WTC11 (cell line): ENCODE measurements at regions of chr2 and their contacts with region 1.

Region 1: DNA sequence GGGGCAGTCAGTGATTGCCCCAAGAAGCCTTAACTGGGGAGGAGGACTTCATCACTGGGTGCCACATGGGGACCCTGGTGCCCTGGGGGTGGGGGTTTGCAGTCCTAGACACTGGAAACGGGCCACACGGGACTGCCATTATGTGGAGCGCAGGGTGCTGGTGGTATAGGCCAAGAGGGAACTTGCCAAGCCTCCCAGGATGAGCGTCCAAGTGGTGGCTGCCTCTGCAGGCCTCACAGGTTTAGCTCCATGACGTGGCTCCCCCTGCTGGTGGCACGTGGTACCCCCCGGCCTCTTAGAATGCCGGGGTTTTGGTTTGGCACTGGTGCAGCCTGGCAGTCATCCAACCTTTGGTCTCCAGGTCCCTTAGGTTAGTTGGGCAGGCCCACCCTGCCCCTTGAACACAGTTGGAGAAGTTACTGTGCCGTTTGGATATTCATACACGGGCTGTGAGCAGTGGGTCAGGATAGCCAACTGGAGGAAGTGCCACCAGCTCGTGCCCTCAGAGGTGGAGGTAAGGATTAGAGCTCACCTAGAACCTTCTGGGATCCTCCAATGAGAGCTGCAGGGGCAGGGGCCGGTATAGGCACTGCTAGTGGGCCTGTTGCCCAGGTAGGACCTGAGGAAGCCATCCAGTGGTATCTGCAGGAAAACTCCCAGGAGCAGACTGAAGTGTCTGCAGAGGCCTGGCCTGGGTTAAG is 5.6 kb downstream of the PTMA start:
- DNase-seq: peak; percentile 90
- ATAC-seq: peak; percentile 35
- H3K4me3 Mint-ChIP-seq: peak overlapping the region; percentile 56
- H3K27ac Mint-ChIP-seq: peak overlapping the region; percentile 98
- H3K4me1 Mint-ChIP-seq: peaks cover 34% of the 10 kb centered on the region
- H3K27me3 Mint-ChIP-seq: no peaks in the 10 kb centered on the region; the same call in 1 of the 2 replicates
- CTCF ChIP-seq: peak; percentile 93

Region 2: GRCh38 chr2:231604685-231605606 is 108.9 kb before region 1 on chr2:
- CTCF ChIA-PET with region 1: interaction called, 14 read pairs
- POLR2A ChIA-PET with region 1: no interaction called
- DNase-seq: peak; percentile 99
- ATAC-seq: peak; percentile 75
- H3K4me3 Mint-ChIP-seq: peak overlapping the region; percentile 61
- H3K27ac Mint-ChIP-seq: peak overlapping the region; percentile 94
- H3K4me1 Mint-ChIP-seq: peaks cover 30% of the 10 kb centered on the region
- H3K27me3 Mint-ChIP-seq: no peaks in the 10 kb centered on the region
- CTCF ChIP-seq: no peak

Region 3: GRCh38 chr2:231621129-231621879 is 92.6 kb before region 1 on chr2:
- CTCF ChIA-PET with region 1: interaction called, 17 read pairs
- POLR2A ChIA-PET with region 1: interaction called, 3 read pairs
- DNase-seq: peak; percentile 55
- ATAC-seq: peak; percentile 79
- H3K4me3 Mint-ChIP-seq: peak overlapping the region; percentile 17
- H3K27ac Mint-ChIP-seq: peak overlapping the region; percentile 88
- H3K4me1 Mint-ChIP-seq: peaks cover 54% of the 10 kb centered on the region
- H3K27me3 Mint-ChIP-seq: no peaks in the 10 kb centered on the region
- CTCF ChIP-seq: no peak

Region 4: DNA sequence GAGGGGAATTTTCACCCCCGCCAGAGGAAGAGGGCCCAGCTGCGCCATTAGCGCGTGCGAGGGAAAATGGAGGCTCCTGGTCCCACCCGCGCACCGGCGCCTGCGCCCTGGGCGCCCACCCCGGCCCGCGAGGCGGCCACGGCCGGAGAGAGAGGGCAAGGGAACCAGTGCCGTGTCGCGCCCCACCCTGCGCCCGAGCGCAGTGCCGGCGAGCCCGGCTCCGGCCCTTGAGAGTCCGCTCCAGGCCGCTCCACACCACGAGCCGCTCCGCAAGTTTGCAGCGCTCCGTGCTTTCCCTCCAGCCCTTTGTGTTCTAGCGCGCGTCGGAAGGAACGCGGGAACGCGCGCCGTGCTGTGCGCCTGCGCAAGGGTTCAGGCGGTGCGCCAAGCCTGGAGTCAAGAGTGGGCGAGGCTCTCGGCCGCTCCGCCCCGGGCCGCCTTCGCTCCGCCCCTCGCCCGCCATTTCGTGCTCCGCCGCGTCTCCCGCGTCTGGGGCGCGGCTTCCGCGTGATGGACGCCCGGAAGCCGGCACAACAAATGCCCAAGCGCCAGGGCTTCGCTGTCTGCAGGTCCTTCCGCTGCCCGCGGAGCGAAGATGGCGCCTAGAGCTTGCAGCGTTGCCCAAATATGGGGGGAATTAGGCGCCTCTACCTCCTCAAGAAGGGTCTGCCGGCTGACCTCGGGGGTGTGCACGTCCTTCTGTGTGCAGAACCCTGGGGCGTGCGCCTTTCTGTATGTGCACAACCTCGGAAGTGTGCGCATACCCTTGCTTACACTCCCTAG is 51.7 kb before region 1 on chr2:
- CTCF ChIA-PET with region 1: interaction called, 13 read pairs
- POLR2A ChIA-PET with region 1: interaction called, 17 read pairs
- DNase-seq: peak; percentile 98
- ATAC-seq: peak; percentile 67
- H3K4me3 Mint-ChIP-seq: peak overlapping the region; percentile 60
- H3K27ac Mint-ChIP-seq: peak overlapping the region; percentile 94
- H3K4me1 Mint-ChIP-seq: peaks cover 44% of the 10 kb centered on the region
- H3K27me3 Mint-ChIP-seq: peaks cover 20% of the 10 kb centered on the region
- CTCF ChIP-seq: no peak

Region 5: GRCh38 chr2:231687133-231687852 is 26.6 kb before region 1 on chr2:
- CTCF ChIA-PET with region 1: interaction called, 125 read pairs
- POLR2A ChIA-PET with region 1: interaction called, 61 read pairs
- DNase-seq: peak; percentile 92
- ATAC-seq: peak; percentile 87
- H3K4me3 Mint-ChIP-seq: peak overlapping the region; percentile 64
- H3K27ac Mint-ChIP-seq: peak overlapping the region; percentile 61
- H3K4me1 Mint-ChIP-seq: peaks cover 49% of the 10 kb centered on the region
- H3K27me3 Mint-ChIP-seq: no peaks in the 10 kb centered on the region
- CTCF ChIP-seq: peak; percentile 33

Region 6: DNA sequence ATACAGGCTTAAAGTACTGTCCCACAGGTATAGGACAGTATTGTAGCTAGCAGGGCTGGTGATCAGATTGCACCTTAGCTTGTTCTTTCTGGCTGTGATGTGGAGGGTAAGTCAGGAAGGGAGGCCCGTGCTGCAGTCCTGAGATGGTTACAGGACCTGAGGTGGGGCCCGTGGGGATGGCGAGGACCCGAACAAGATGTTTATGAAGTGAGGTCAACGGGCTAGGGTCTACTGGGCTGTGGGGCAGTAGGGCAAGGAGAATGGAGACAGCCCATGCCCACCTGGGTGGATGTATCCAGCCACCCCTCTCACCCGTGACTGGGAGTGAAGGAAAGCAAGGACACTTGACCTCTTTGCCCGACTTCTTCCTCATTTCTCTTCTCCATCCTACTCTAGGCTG is 12.3 kb after region 1 on chr2:
- CTCF ChIA-PET with region 1: interaction called, 32 read pairs
- POLR2A ChIA-PET with region 1: interaction called, 8 read pairs
- DNase-seq: no peak
- ATAC-seq: no peak
- H3K4me3 Mint-ChIP-seq: no peak overlapping the region
- H3K27ac Mint-ChIP-seq: no peak overlapping the region
- H3K4me1 Mint-ChIP-seq: peaks cover 9% of the 10 kb centered on the region
- H3K27me3 Mint-ChIP-seq: no peaks in the 10 kb centered on the region
- CTCF ChIP-seq: no peak

Region 7: GRCh38 chr2:231786177-231786916 is 72.5 kb after region 1 on chr2 and contains the start of gene COPS7B:
- CTCF ChIA-PET with region 1: interaction called, 37 read pairs
- POLR2A ChIA-PET with region 1: interaction called, 3 read pairs
- DNase-seq: peak; percentile 91
- ATAC-seq: peak; percentile 82
- H3K4me3 Mint-ChIP-seq: peak within 1 kb of the TSS; percentile 95
- H3K27ac Mint-ChIP-seq: peak within 1 kb of the TSS; percentile 99
- H3K4me1 Mint-ChIP-seq: peaks cover 30% of the 10 kb centered on the region
- H3K27me3 Mint-ChIP-seq: no peaks in the 10 kb centered on the region
- CTCF ChIP-seq: peak; percentile 25; the same call in 1 of the 2 replicates
- total RNA-seq, gene COPS7B: 56.5 to 63.8 TPM (median 57.1 TPM) in 3 replicates